ENCODE measurements at regions of chr14 and their contacts with region 1.

Region 1: GRCh38 chr14:78967110-78967809 is 797.1 kb downstream of the NRXN3 start:
- DNase-seq: no peak
- H3K4me3 ChIP-seq: no peak overlapping the region
- H3K27ac ChIP-seq: no peak overlapping the region
- H3K27me3 ChIP-seq: no peaks in the 10 kb centered on the region
- CTCF ChIP-seq: no peak

Region 2: GRCh38 chr14:80862983-80863382 is 1895.7 kb after region 1 on chr14:
- CTCF ChIA-PET with region 1: interaction called, 15 read pairs
- POLR2A ChIA-PET with region 1: no interaction called
- DNase-seq: no peak
- H3K4me3 ChIP-seq: no peak overlapping the region
- H3K27ac ChIP-seq: no peak overlapping the region
- H3K27me3 ChIP-seq: no peaks in the 10 kb centered on the region
- CTCF ChIP-seq: peak; percentile 46